ENCODE measurements at regions of chr12 and their contacts with region 1.

Region 1: DNA sequence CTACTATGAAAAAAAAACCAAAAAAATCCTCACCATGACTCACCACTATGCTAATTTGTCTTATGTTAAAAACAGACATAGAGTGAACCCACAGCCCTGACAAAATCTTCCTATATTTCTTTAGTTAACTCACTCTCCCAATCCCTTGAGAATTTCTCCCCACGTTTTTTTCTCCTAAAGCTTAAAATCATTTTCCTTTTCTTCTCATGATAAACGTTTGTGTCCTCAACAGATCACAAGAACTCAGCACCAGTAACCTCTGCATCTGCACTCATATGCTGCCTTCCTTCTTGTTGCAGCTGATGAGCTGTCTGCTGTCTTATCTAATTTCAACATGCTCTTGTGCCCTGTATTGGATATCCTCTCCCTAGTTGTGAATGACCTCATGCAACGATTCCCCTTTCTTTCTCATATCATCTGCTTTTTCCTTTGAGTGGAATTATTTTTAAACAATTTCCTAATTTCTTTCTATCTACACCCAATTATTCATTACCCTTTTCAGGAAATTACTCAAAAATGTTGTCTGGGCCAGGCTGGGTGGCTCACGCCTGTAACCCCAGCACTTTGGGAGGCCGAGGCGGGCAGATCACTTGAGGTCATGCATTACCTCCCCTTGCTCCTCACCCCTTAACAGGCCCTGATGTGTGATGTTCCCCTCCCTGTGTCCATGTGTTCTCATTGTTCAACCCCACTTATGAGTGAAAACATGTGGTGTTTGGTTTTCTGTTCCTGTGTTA is 427.5 kb upstream of the MGAT4C start:
- DNase-seq: no peak
- ATAC-seq: no peak
- H3K4me3 ChIP-seq: no peak overlapping the region
- H3K4me3 Mint-ChIP-seq: no peak overlapping the region
- H3K27ac ChIP-seq: no peak overlapping the region
- H3K27ac Mint-ChIP-seq: no peak overlapping the region
- H3K4me1 ChIP-seq: no peaks in the 10 kb centered on the region
- H3K4me1 Mint-ChIP-seq: no peaks in the 10 kb centered on the region
- H3K27me3 ChIP-seq: no peaks in the 10 kb centered on the region
- H3K27me3 Mint-ChIP-seq: no peaks in the 10 kb centered on the region

Region 2: GRCh38 chr12:86698641-86698980 is 14.9 kb after region 1 on chr12:
- CTCF ChIA-PET with region 1: no interaction called
- POLR2A ChIA-PET with region 1: interaction called in 1 of 2 experiments, 13 read pairs
- DNase-seq: no peak
- ATAC-seq: no peak
- H3K4me3 ChIP-seq: no peak overlapping the region
- H3K4me3 Mint-ChIP-seq: no peak overlapping the region
- H3K27ac ChIP-seq: no peak overlapping the region
- H3K27ac Mint-ChIP-seq: no peak overlapping the region
- H3K4me1 ChIP-seq: no peaks in the 10 kb centered on the region
- H3K4me1 Mint-ChIP-seq: no peaks in the 10 kb centered on the region
- H3K27me3 ChIP-seq: no peaks in the 10 kb centered on the region
- H3K27me3 Mint-ChIP-seq: no peaks in the 10 kb centered on the region